CD8-positive, alpha-beta memory T cell (primary cell): ENCODE measurements at regions of chr20 and their contacts with region 1.

Region 1: GRCh38 chr20:47272893-47273590 is 83.5 kb downstream of the ZMYND8 start:
- DNase-seq: peak in 4 of 5 donors; percentile 21 to 56 (median 46)
- H3K4me3 ChIP-seq: no peak overlapping the region
- H3K4me3 Mint-ChIP-seq: no peak overlapping the region
- H3K27ac ChIP-seq: no peak overlapping the region
- H3K27ac Mint-ChIP-seq: peak overlapping the region in 4 of 8 donors; percentile 2 to 77 (median 34)
- H3K4me1 ChIP-seq: no peaks in the 10 kb centered on the region
- H3K4me1 Mint-ChIP-seq: peaks cover 14 to 29% (median 14%) of the 10 kb centered on the region in 3 donors
- H3K27me3 ChIP-seq: no peaks in the 10 kb centered on the region
- H3K27me3 Mint-ChIP-seq: no peaks in the 10 kb centered on the region

Region 2: DNA sequence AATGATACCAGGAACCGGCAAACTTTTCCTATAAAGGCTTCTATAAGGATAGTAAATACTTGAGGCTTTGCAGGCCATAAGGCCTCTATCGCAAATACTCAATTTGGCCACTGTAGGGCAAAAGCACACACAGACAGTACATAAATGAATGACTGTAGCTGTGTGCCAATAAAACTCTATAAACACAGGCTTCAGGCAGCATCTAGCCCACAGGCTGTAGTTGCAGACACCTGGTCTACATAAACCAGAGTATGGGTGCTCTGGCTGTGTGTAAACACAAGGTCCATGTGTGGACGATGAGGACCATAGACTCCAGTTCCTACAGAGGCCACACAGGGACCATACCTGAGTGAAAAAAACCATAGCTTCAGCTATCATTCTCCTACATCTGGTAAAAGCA is 31.2 kb after region 1 on chr20:
- CTCF ChIA-PET with region 1: no interaction called
- POLR2A ChIA-PET with region 1: no interaction called
- DNase-seq: no peak
- H3K4me3 ChIP-seq: no peak overlapping the region
- H3K4me3 Mint-ChIP-seq: no peak overlapping the region
- H3K27ac ChIP-seq: no peak overlapping the region
- H3K27ac Mint-ChIP-seq: peak overlapping the region in 4 of 8 donors; percentile 33 to 86 (median 42)
- H3K4me1 ChIP-seq: peaks cover 4% of the 10 kb centered on the region
- H3K4me1 Mint-ChIP-seq: peaks cover 17 to 30% (median 28%) of the 10 kb centered on the region in 3 donors
- H3K27me3 ChIP-seq: no peaks in the 10 kb centered on the region
- H3K27me3 Mint-ChIP-seq: no peaks in the 10 kb centered on the region

Region 3: DNA sequence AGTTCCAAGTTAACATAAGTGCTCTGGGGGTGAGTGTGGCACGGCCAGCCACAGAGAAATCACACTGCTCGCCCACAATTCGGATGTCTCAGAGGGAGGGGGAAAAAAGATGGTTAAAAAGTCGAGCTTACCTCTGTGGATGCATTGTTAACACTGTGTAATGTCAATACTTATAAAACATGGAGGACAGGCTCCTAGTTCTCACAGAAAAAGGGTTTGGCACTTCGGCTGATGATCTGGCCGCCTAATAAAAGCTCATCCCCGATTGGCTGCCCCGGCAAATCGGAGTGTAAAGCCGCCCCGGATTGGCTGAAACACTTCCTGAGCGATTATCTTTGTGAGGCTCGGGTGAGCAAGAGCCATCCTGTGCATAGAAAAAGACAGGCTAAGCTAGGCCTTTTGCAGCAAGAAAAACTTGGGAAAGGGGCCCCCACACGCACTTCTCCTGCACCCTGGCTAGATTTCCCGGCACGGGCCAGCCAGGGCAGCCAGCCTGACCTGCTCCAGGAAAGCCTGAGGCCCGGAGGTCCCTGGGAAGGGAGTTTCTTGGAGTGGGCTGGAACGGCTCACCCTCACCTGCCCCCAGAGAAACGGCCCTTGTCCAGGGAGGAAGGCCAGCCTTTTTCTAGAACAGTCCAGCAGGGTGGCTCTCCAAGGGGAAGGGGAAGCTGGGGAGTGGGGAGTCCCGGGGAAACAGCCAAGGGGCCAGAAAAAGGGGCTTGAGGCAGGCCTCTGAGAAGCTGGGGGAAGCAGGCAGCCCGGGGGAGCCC is 83.7 kb after region 1 on chr20 and contains the start of gene ZMYND8:
- CTCF ChIA-PET with region 1: interaction called, 20 read pairs
- POLR2A ChIA-PET with region 1: no interaction called
- DNase-seq: peak; percentile 78 to 99 (median 95)
- H3K4me3 ChIP-seq: peak within 1 kb of the TSS; percentile 68
- H3K4me3 Mint-ChIP-seq: peak within 1 kb of the TSS in 6 of 7 donors; percentile 85 to 97 (median 94)
- H3K27ac ChIP-seq: peak within 1 kb of the TSS; percentile 89
- H3K27ac Mint-ChIP-seq: peak within 1 kb of the TSS; percentile 93 to 99 (median 98)
- H3K4me1 ChIP-seq: peaks cover 72% of the 10 kb centered on the region
- H3K4me1 Mint-ChIP-seq: peaks cover 5 to 40% (median 22%) of the 10 kb centered on the region in 3 donors
- H3K27me3 ChIP-seq: no peaks in the 10 kb centered on the region
- H3K27me3 Mint-ChIP-seq: peaks cover 0 to 4% of the 10 kb centered on the region in 2 donors
- total RNA-seq, gene ZMYND8: 25.8 to 30.7 TPM

Region 4: GRCh38 chr20:47620808-47621805 is 348.1 kb after region 1 on chr20:
- CTCF ChIA-PET with region 1: interaction called, 17 read pairs
- POLR2A ChIA-PET with region 1: no interaction called
- DNase-seq: peak in 2 of 5 donors; percentile 25 to 35
- H3K4me3 ChIP-seq: no peak overlapping the region
- H3K4me3 Mint-ChIP-seq: no peak overlapping the region
- H3K27ac ChIP-seq: no peak overlapping the region
- H3K27ac Mint-ChIP-seq: peak overlapping the region in 3 of 8 donors; percentile 26 to 36 (median 31)
- H3K4me1 ChIP-seq: no peaks in the 10 kb centered on the region
- H3K4me1 Mint-ChIP-seq: peaks cover 17 to 31% (median 22%) of the 10 kb centered on the region in 3 donors
- H3K27me3 ChIP-seq: no peaks in the 10 kb centered on the region
- H3K27me3 Mint-ChIP-seq: peaks cover 0 to 2% of the 10 kb centered on the region in 2 donors